Natural killer cell (primary cell): ENCODE measurements at regions of chr1 and their contacts with region 1.

Region 1: DNA sequence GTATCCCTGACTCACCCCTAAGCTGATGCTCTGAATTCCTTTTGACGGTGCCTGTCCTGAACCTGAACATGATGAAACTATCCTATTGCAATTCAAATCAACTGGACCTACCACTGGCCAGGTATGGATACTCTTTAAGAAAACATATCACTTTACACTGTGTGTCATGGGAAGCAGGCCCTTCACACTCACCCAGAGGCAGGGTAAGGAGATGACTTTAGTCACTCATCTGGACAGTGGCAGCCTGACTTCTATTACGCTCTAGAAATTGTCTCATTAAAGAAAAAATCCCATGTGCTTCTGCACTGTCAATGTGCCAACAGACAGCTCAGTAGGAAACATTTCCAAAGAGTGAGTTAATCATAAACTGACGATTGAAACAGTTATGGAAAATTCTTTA is 94.3 kb downstream of the VAV3 start:
- DNase-seq: no peak
- ATAC-seq: peak in 1 of 3 donors; percentile 52
- H3K4me3 ChIP-seq: no peak overlapping the region
- H3K4me3 Mint-ChIP-seq: peak overlapping the region; percentile 49
- H3K27ac ChIP-seq: peak overlapping the region; percentile 76
- H3K27ac Mint-ChIP-seq: peak overlapping the region; percentile 89 to 91
- H3K4me1 ChIP-seq: peaks cover 30% of the 10 kb centered on the region
- H3K4me1 Mint-ChIP-seq: peaks cover 70 to 87% of the 10 kb centered on the region in 2 donors
- H3K27me3 ChIP-seq: no peaks in the 10 kb centered on the region
- H3K27me3 Mint-ChIP-seq: no peaks in the 10 kb centered on the region
- CTCF ChIP-seq: no peak

Region 2: DNA sequence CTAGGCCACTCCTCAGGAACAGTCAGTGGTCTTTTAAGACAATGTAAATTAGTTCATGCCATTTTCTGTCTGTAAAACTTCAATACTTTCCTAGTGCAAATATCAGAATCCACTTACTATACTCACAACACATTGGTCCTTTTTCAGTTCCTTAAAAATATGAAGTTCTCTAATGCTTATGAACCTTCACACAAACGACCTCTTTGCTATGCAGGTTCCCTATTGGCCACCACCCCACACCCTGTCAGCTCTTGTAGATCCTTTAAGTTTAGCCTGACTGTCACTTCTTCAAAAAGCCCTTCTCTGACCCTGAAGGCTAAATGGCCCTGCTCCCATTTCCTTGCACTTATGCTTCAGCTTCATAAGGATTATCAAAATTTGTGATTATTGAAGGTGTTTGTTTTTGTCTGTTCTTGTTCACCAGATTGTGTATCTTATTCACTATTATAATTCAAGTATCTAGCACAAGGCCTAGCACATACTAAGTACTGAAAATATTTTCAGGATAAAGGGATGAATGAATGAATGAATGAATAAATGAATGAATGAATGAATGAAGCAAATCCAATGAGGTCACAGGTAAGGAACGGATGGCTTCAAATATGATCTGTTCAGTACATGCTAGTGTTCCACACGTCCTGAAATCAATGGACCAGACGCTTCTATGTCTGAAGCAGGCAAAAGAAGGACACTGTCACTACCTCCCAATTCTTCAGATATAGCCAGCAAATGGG is 279.6 kb before region 1 on chr1:
- intact Hi-C with region 1: no loop called
- DNase-seq: no peak
- ATAC-seq: no peak
- H3K4me3 ChIP-seq: no peak overlapping the region
- H3K4me3 Mint-ChIP-seq: no peak overlapping the region
- H3K27ac ChIP-seq: no peak overlapping the region
- H3K27ac Mint-ChIP-seq: no peak overlapping the region
- H3K4me1 ChIP-seq: no peaks in the 10 kb centered on the region
- H3K4me1 Mint-ChIP-seq: peaks cover 23 to 28% of the 10 kb centered on the region in 2 donors
- H3K27me3 ChIP-seq: no peaks in the 10 kb centered on the region
- H3K27me3 Mint-ChIP-seq: no peaks in the 10 kb centered on the region
- CTCF ChIP-seq: no peak

Region 3: DNA sequence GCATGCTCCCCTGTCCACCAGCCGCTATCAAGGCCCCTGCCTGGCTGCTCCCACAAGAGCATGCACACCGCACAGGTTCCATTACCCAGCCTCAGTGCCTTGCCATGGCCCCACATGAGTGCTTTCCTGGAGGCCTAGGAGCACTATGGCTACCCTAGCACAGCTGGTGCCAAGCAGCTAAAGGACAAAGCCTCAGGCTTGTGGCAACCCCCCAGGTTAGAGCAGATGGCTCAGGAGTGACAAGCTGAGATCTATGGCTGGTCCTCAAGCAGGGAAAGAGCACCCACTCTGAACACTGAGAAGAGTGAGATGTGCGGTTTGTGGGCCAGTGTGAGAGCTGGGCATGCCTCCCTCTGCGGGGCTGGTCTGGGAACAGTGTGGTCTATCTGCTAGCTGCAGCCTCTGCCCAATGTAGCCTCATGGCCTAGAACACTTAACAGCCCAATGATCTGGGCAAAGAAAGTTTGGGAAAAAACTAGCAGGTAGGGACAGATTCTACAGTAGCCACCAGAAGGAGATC is 35.5 kb before region 1 on chr1:
- intact Hi-C with region 1: loop called (anchors 5 kb)
- DNase-seq: no peak
- ATAC-seq: peak; percentile 56 to 81 (median 64)
- H3K4me3 ChIP-seq: no peak overlapping the region
- H3K4me3 Mint-ChIP-seq: peak overlapping the region; percentile 43
- H3K27ac ChIP-seq: peak overlapping the region; percentile 46
- H3K27ac Mint-ChIP-seq: peak overlapping the region; percentile 87 to 89
- H3K4me1 ChIP-seq: peaks cover 31% of the 10 kb centered on the region
- H3K4me1 Mint-ChIP-seq: peaks cover 90 to 92% of the 10 kb centered on the region in 2 donors
- H3K27me3 ChIP-seq: no peaks in the 10 kb centered on the region
- H3K27me3 Mint-ChIP-seq: no peaks in the 10 kb centered on the region
- CTCF ChIP-seq: no peak

Region 4: DNA sequence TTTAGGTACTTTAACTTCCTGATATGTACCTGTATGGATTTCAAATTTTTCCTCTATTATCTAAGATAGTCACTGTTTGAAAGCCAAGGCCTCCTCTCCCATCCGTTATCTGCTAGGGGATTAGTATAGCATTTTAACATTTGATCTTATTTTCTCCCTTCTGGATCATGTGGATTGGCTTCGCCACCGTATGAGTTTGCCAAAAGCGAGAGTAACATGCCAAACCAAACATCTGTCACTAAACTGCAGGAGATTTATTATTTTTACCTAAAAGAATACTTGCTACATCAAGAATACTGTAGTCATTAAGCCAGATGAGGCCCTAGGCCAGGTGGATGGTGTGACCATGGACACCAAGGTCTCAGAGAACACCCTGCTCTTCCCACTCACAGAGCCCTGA is 660.7 kb after region 1 on chr1:
- intact Hi-C with region 1: no loop called
- DNase-seq: no peak
- ATAC-seq: no peak
- H3K4me3 ChIP-seq: no peak overlapping the region
- H3K4me3 Mint-ChIP-seq: no peak overlapping the region
- H3K27ac ChIP-seq: no peak overlapping the region
- H3K27ac Mint-ChIP-seq: no peak overlapping the region
- H3K4me1 ChIP-seq: no peaks in the 10 kb centered on the region
- H3K4me1 Mint-ChIP-seq: peaks cover 0 to 6% of the 10 kb centered on the region in 2 donors
- H3K27me3 ChIP-seq: no peaks in the 10 kb centered on the region
- H3K27me3 Mint-ChIP-seq: peaks cover 6 to 9% of the 10 kb centered on the region in 2 donors
- CTCF ChIP-seq: no peak